ENCODE measurements at regions of chr12 and their contacts with region 1.

Region 1: GRCh38 chr12:71551529-71551928 is 111.9 kb downstream of the LGR5 start:
- DNase-seq: peak; percentile 15
- ATAC-seq: no peak; the same call in 1 of the 2 replicates
- H3K4me3 ChIP-seq: no peak overlapping the region
- H3K27ac ChIP-seq: no peak overlapping the region
- H3K4me1 ChIP-seq: no peaks in the 10 kb centered on the region
- H3K27me3 ChIP-seq: no peaks in the 10 kb centered on the region
- CTCF ChIP-seq: peak; percentile 53
- POLR2A ChIP-seq: no peak
- RAD21 ChIP-seq: peak; percentile 47

Region 2: GRCh38 chr12:71430756-71431155 is 120.8 kb before region 1 on chr12:
- CTCF ChIA-PET with region 1: no interaction called
- POLR2A ChIA-PET with region 1: no interaction called
- dilution Hi-C with region 1: no loop called
- in situ Hi-C with region 1: no loop called
- intact Hi-C with region 1: loop called (anchors 5 kb)
- DNase-seq: no peak
- ATAC-seq: no peak
- H3K4me3 ChIP-seq: no peak overlapping the region
- H3K27ac ChIP-seq: no peak overlapping the region
- H3K4me1 ChIP-seq: no peaks in the 10 kb centered on the region
- H3K27me3 ChIP-seq: no peaks in the 10 kb centered on the region
- CTCF ChIP-seq: no peak
- POLR2A ChIP-seq: no peak
- RAD21 ChIP-seq: no peak